Common myeloid progenitor, CD34-positive (primary cell): ENCODE measurements at regions of chr4 and their contacts with region 1.

Region 1: DNA sequence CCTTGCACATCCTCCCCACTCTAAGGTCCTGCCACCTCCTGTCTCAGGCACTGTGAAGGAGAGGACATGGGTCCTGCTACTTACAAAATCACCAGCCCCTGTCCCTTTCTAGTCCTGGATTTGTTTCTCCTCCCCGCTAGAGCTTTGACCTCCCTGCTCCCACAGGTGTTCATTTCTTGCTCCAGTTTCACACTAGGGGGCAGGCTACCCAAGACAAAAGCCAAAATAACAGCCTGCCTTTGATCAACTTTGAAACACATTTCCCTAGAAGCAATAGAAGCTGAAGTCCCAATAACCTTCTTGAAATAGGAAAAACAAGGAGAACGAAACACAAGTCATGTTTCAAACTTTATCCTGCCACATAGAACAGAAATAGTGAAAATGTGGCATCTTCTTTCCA is 164.4 kb downstream of the QDPR start:
- DNase-seq: peak; percentile 27 to 54 (median 45)
- H3K4me3 ChIP-seq: no peak overlapping the region
- H3K27ac ChIP-seq: no peak overlapping the region
- H3K4me1 ChIP-seq: no peaks in the 10 kb centered on the region
- H3K27me3 ChIP-seq: no peaks in the 10 kb centered on the region

Region 2: GRCh38 chr4:17468371-17469221 is 121.2 kb after region 1 on chr4:
- CTCF ChIA-PET with region 1: interaction called, 29 read pairs
- POLR2A ChIA-PET with region 1: no interaction called
- DNase-seq: peak; percentile 24 to 52 (median 49)
- H3K4me3 ChIP-seq: no peak overlapping the region
- H3K27ac ChIP-seq: no peak overlapping the region
- H3K4me1 ChIP-seq: no peaks in the 10 kb centered on the region
- H3K27me3 ChIP-seq: no peaks in the 10 kb centered on the region